ENCODE measurements at regions of chr1 and their contacts with region 1.

Region 1: GRCh38 chr1:161382214-161383019 is 14.7 kb upstream of the CFAP126 start:
- DNase-seq: peak; percentile 60
- H3K4me3 ChIP-seq: peak overlapping the region in 1 of 2 experiments; percentile 34; a peak in 2 of 4 replicates
- H3K27ac ChIP-seq: peak overlapping the region in 1 of 2 experiments; percentile 72; a peak in 2 of 4 replicates
- H3K4me1 ChIP-seq: no peaks in the 10 kb centered on the region; a peak in 1 of 4 replicates
- H3K27me3 ChIP-seq: no peaks in the 10 kb centered on the region
- CTCF ChIP-seq: peak; percentile 81
- EP300 ChIP-seq: no peak
- RAD21 ChIP-seq: peak; percentile 78

Region 2: DNA sequence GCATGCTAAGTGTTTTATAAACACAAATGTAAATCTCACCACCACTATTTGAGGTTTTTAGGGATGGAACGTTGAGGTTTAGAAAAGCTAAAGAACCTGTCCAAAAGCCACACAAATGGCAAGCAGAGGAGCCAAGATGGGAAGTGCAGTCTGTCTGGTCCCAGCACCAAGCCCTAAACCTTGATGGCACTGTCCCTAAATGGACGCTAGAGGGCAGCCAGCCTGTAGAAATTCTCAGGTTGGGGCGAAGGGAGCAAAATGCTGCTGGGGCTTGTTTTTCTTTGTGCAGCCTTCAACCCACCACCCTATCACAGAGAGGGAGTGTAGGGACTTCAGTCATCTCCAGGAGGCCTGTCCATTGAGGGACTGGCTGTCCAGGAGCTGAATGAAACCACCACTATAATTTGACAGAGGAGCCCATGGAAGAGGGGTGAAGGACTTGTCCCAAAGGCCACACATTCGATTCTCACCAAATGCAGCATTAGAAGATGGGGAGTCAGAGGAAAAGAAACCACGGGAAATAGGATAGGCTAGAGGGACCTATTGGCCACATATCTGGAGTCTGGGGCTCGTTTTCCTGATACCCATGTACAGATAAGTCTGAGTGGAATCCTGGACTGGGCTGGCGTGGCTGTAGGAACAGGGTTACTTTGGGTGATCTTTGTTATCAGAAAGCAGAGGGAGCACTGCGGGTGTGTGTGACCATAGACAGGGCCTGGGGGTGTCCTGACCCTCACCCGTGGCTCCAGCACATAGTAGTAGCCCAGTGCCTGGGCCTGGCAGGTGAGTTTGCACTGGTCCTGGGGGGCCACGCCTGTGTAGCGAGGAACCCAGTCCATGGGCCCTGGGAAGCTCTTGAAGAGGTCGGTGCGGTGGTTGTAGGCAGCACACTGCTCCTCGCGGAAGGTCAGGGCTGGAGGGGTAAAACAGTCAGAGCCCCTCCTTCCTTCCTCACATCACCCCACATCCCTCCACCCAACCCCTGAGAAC is 189.6 kb before region 1 on chr1:
- CTCF ChIA-PET with region 1: interaction called, 33 read pairs
- POLR2A ChIA-PET with region 1: no interaction called
- DNase-seq: peak; percentile 89
- H3K4me3 ChIP-seq: no peak overlapping the region
- H3K27ac ChIP-seq: peak overlapping the region in 1 of 2 experiments; percentile 48; a peak in 2 of 4 replicates
- H3K4me1 ChIP-seq: peaks cover 11 to 35% of the 10 kb centered on the region in 2 experiments; a peak in 3 of 4 replicates
- H3K27me3 ChIP-seq: no peaks in the 10 kb centered on the region
- CTCF ChIP-seq: peak; percentile 86
- EP300 ChIP-seq: no peak
- RAD21 ChIP-seq: peak; percentile 85

Region 3: DNA sequence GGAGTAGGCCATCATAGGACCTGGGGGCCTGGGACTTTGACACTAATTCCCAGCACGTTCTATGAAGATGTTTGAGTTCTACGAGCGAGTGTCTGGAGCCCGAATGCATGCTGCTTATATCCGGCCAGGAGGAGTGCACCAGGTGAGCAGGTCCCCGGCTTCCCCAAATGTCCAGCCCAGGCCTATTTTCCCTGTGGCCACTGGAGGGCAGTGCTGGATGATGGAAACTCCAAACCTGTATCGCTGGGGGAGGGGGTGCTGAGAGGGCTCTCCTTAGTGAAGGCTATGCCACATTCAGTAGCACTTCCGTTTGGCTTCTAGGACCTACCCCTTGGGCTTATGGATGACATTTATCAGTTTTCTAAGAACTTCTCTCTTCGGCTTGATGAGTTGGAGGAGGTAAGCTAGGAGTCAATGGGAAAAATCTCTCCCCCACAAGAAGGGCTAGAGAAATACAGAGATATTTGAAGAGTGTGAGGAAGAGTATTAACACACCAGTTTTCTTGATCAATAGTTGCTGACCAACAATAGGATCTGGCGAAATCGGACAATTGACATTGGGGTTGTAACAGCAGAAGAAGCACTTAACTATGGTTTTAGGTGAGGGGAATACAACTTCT is 172.5 kb before region 1 on chr1:
- CTCF ChIA-PET with region 1: interaction called, 24 read pairs
- POLR2A ChIA-PET with region 1: no interaction called
- DNase-seq: peak; percentile 84
- H3K4me3 ChIP-seq: no peak overlapping the region; a peak in 1 of 4 replicates
- H3K27ac ChIP-seq: no peak overlapping the region
- H3K4me1 ChIP-seq: no peaks in the 10 kb centered on the region
- H3K27me3 ChIP-seq: no peaks in the 10 kb centered on the region
- CTCF ChIP-seq: peak; percentile 95
- EP300 ChIP-seq: no peak
- RAD21 ChIP-seq: peak; percentile 77

Region 4: DNA sequence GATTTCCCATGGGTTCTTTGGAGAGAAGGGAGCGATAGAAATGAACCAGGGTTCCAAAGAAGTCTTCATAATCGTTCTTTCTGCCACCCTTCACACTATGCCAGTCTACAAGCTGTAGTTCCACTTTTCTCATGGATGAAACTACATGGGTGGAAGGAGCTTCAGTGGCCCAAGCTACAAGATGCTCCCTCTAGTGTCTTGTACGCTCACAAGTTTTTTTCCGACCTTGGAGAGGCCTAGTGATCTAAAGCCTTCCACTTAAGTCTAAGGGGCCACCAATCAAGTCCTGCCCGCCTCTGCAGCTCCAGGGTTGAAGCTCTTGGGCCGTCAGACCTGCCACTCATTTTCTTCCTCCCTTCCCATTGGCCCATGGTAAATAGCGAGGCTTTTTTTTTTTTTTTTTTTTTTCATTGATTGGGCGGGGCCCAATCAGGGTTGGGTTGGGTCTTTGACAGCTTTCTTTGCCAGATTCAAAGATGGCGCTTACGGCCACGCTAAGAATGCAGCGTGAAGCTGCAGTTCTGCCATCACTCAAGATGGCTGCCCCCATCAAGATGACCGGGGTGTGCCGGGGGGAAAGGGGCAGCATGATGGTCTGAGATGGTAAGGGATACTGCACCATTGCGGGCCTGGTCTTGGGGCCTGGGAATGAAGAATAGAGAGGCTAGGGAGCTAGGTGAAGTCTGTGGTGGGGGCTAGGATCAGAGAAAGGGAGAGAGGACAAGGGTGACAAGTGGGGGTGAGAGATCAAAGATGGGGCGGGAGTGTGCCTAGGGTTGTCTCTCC is 156.7 kb before region 1 on chr1 and contains the start of gene TOMM40L:
- CTCF ChIA-PET with region 1: interaction called, 78 read pairs
- POLR2A ChIA-PET with region 1: no interaction called
- DNase-seq: peak; percentile 88
- H3K4me3 ChIP-seq: peak within 1 kb of the TSS; percentile 69 to 74
- H3K27ac ChIP-seq: peak within 1 kb of the TSS in 1 of 2 experiments; percentile 67; a peak in 3 of 4 replicates
- H3K4me1 ChIP-seq: peaks cover 8 to 21% of the 10 kb centered on the region in 2 experiments; a peak in 3 of 4 replicates
- H3K27me3 ChIP-seq: no peaks in the 10 kb centered on the region
- CTCF ChIP-seq: peak; percentile 70
- EP300 ChIP-seq: no peak
- RAD21 ChIP-seq: peak; percentile 50
- polyA plus RNA-seq, gene TOMM40L: 9.7 and 11.9 TPM in 2 replicates

Region 5: GRCh38 chr1:161274874-161275273 is 107.5 kb before region 1 on chr1:
- CTCF ChIA-PET with region 1: no interaction called
- POLR2A ChIA-PET with region 1: no interaction called
- DNase-seq: peak; percentile 65
- H3K4me3 ChIP-seq: no peak overlapping the region
- H3K27ac ChIP-seq: no peak overlapping the region
- H3K4me1 ChIP-seq: no peaks in the 10 kb centered on the region; a peak in 1 of 4 replicates
- H3K27me3 ChIP-seq: peaks cover 16% of the 10 kb centered on the region; the same call in 1 of the 2 replicates
- CTCF ChIP-seq: no peak
- EP300 ChIP-seq: no peak
- RAD21 ChIP-seq: no peak

Region 6: GRCh38 chr1:161292631-161293030 is 89.8 kb before region 1 on chr1:
- CTCF ChIA-PET with region 1: interaction called, 13 read pairs
- POLR2A ChIA-PET with region 1: no interaction called
- DNase-seq: no peak
- H3K4me3 ChIP-seq: no peak overlapping the region
- H3K27ac ChIP-seq: no peak overlapping the region
- H3K4me1 ChIP-seq: no peaks in the 10 kb centered on the region
- H3K27me3 ChIP-seq: no peaks in the 10 kb centered on the region
- CTCF ChIP-seq: no peak
- EP300 ChIP-seq: no peak
- RAD21 ChIP-seq: no peak

Region 7: DNA sequence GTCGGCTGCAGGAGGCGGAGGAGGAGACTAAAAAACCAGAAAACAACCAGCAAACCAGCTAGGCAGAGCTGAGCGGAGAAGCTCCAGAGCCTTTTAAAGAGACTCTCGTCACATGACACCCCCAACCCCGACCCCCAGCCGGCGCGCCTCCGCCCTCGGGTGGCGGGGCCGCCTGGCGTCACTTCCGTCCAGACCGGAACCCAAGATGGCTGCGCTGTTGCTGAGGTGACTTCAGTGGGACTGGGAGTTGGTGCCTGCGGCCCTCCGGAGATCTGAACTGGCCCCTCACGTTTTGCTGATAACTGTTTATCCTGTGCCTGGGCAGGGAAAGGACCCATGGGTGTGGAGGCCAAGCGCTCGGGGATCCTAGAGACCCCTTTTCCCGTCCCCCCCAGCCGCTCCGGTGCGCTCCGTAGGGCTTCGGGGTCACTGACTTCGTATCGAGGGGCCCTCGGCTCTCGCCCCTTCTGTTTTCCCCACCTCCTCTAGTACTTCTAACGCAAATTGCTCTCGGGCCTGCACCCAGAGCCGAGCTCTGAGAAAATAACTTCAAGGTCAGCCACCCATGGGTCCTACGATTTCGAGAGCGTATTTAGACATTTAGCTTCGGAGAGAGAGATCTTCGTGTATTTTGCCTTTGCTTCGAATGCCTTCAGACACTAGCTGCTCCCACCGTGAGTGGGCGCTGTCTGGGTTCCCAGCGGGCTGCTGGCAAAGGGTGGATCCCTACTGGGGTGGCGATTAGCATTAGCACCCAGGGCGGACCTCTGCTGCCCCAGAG is 68.0 kb before region 1 on chr1 and contains the start of gene SDHC:
- CTCF ChIA-PET with region 1: interaction called, 13 read pairs
- POLR2A ChIA-PET with region 1: no interaction called
- DNase-seq: peak; percentile 95
- H3K4me3 ChIP-seq: peak within 1 kb of the TSS; percentile 81 to 92
- H3K27ac ChIP-seq: peak within 1 kb of the TSS; percentile 89 to 91
- H3K4me1 ChIP-seq: peaks cover 0 to 12% of the 10 kb centered on the region in 2 experiments; a peak in 2 of 4 replicates
- H3K27me3 ChIP-seq: no peaks in the 10 kb centered on the region
- CTCF ChIP-seq: peak; percentile 62
- EP300 ChIP-seq: peak in 1 of 2 experiments; percentile 47; a peak in 1 of 4 replicates
- RAD21 ChIP-seq: no peak
- polyA plus RNA-seq, gene SDHC: 195 and 341 TPM in 2 replicates

Region 8: GRCh38 chr1:161427733-161428516 is 45.5 kb after region 1 on chr1:
- CTCF ChIA-PET with region 1: no interaction called
- POLR2A ChIA-PET with region 1: no interaction called
- DNase-seq: peak; percentile 36
- H3K4me3 ChIP-seq: peak overlapping the region; percentile 41 to 45
- H3K27ac ChIP-seq: no peak overlapping the region
- H3K4me1 ChIP-seq: peaks cover 0 to 7% of the 10 kb centered on the region in 2 experiments; a peak in 2 of 4 replicates
- H3K27me3 ChIP-seq: peaks cover 9% of the 10 kb centered on the region; the same call in 1 of the 2 replicates
- CTCF ChIP-seq: no peak
- EP300 ChIP-seq: no peak
- RAD21 ChIP-seq: no peak

Region 9: DNA sequence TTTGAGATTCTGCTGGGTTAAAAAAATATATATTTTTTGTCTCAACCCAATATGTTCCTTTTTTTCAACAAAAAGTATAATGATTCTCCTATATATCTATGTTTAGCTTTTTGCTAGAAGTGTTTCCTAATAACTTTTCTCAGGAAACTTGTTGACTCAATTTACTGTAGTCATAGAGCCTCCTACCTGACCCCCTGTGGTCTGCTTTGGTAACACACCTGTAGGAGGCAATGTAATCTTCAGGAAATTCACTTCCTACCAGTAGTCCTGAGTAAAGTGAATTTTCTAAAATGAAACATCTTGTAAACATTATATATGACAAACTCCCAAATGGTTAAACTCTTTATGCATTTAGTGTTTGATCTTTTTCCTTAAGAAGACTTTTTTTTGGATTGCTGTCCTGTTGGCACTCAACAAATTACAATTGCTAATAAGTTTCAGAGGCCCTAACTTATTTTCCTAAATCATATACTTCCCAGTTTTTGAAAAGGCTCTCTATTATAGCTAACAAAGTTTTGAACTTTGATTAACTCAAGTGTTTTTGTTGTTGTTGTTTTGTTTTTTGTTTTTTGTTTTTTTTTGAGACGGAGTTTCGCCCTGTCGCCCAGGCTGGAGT is 523.0 kb after region 1 on chr1:
- CTCF ChIA-PET with region 1: no interaction called
- POLR2A ChIA-PET with region 1: no interaction called
- DNase-seq: peak; percentile 38
- H3K4me3 ChIP-seq: no peak overlapping the region
- H3K27ac ChIP-seq: no peak overlapping the region
- H3K4me1 ChIP-seq: peaks cover 6 to 9% of the 10 kb centered on the region in 2 experiments; a peak in 2 of 4 replicates
- H3K27me3 ChIP-seq: no peaks in the 10 kb centered on the region
- CTCF ChIP-seq: peak; percentile 58
- EP300 ChIP-seq: no peak
- RAD21 ChIP-seq: peak; percentile 34

Measured in SK-N-SH (cell line).